Panc1 (cell line): ENCODE measurements at regions of chr11 and their contacts with region 1.

Region 1: GRCh38 chr11:126419801-126420697 is 64.6 kb downstream of the ST3GAL4 start:
- DNase-seq: no peak
- ATAC-seq: no peak
- H3K4me3 ChIP-seq: no peak overlapping the region
- H3K27ac ChIP-seq: no peak overlapping the region
- H3K4me1 ChIP-seq: no peaks in the 10 kb centered on the region
- H3K27me3 ChIP-seq: no peaks in the 10 kb centered on the region
- CTCF ChIP-seq: no peak

Region 2: DNA sequence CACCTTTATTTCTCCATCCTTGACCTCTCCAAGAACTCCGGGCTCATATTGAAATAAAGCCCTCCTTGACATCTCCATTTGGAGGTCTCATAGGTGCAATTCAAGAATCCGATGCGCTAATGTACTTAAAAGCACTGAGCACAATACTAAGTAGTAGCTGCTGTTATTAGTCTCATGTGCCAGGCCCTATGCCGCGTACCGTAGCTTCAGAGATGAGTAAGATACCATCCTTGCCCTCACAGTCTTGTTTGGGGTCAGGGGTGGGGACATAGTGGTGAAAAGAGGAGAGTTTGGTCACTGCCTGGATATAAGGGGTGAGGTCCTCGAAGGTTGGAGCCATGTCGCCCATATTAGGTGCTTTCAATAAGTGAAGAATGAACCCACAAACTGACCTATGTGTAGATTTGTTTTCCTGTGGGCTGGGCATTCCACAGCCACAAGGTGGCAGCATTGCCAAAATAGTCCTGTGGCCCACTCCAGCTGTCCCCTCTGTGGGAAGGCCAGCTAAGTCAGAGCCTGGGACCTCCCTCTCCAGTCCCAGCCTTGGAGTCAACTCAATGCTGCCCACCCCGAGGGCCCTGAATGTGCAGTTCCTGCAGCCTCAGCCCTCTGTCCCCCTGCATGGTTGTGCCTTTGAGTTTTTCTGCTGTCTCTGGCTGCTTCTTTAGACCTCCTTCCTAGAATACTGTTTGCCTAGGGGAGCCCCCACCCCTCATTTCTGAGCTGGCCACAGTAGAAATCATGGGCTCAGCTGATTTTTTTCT is 109.6 kb before region 1 on chr11:
- CTCF ChIA-PET with region 1: no interaction called
- POLR2A ChIA-PET with region 1: no interaction called
- in situ Hi-C with region 1: no loop called
- intact Hi-C with region 1: loop called (anchors 10 kb)
- DNase-seq: no peak
- ATAC-seq: peak; percentile 97
- H3K4me3 ChIP-seq: no peak overlapping the region
- H3K27ac ChIP-seq: no peak overlapping the region
- H3K4me1 ChIP-seq: no peaks in the 10 kb centered on the region
- H3K27me3 ChIP-seq: no peaks in the 10 kb centered on the region
- CTCF ChIP-seq: peak; percentile 94

Region 3: DNA sequence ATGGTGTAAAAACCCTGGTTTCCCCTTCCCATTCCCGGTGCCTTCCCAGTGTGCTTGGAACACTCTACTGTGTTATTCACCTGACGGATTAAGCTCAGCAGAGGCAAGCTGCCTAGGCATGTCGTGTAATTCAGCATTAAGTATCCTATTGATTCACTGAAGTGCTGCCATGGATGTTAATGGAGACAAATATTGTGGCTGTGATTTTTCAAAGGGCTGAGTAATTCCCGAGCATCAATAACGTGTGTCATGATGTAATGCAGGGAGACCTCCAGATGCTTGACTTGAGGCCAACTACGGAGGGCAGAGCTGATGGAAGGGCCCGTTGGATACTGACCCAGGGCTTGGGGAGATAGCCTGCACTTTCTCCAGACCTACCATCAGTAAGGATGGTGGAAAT is 204.5 kb after region 1 on chr11:
- CTCF ChIA-PET with region 1: no interaction called
- POLR2A ChIA-PET with region 1: no interaction called
- in situ Hi-C with region 1: no loop called
- intact Hi-C with region 1: no loop called
- DNase-seq: no peak
- ATAC-seq: no peak
- H3K4me3 ChIP-seq: no peak overlapping the region
- H3K27ac ChIP-seq: no peak overlapping the region
- H3K4me1 ChIP-seq: no peaks in the 10 kb centered on the region
- H3K27me3 ChIP-seq: peaks cover 12% of the 10 kb centered on the region
- CTCF ChIP-seq: no peak